Breast epithelium (tissue), 4 donors: ENCODE measurements at regions of chr12 and their contacts with region 1.

Region 1: DNA sequence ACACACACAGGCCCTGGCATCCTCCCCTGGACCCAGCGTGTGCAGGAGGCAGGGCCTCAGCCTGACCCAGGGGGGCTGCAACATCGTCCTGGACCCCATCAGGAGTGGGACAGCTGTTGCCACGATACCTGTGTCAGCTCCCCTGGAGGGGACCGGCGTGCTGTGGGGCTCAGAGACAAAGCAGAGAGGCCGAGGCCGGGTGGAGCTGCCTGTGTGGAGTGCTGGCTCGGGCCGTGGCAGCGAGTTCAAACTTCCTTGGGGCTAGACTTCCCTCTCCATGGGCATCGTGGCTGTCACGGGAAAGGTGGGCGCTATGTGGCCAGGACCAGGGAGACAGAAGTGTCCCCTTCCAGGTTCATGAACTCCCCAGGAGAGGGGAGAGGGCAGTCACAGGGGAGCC is 155.0 kb upstream of the SFSWAP start:
- DNase-seq: no peak
- H3K4me3 ChIP-seq: no peak overlapping the region
- H3K27ac ChIP-seq: no peak overlapping the region
- H3K4me1 ChIP-seq: no peaks in the 10 kb centered on the region
- H3K27me3 ChIP-seq: peaks cover 0 to 38% of the 10 kb centered on the region in 2 donors
- CTCF ChIP-seq: no peak
- POLR2A ChIP-seq: no peak

Region 2: GRCh38 chr12:131454418-131455217 is 101.2 kb before region 1 on chr12:
- intact Hi-C with region 1: no loop called
- DNase-seq: no peak
- H3K4me3 ChIP-seq: no peak overlapping the region
- H3K27ac ChIP-seq: no peak overlapping the region
- H3K4me1 ChIP-seq: no peaks in the 10 kb centered on the region
- H3K27me3 ChIP-seq: peaks cover 0 to 38% of the 10 kb centered on the region in 2 donors
- CTCF ChIP-seq: peak in 1 of 3 donors; percentile 32
- POLR2A ChIP-seq: no peak

Region 3: DNA sequence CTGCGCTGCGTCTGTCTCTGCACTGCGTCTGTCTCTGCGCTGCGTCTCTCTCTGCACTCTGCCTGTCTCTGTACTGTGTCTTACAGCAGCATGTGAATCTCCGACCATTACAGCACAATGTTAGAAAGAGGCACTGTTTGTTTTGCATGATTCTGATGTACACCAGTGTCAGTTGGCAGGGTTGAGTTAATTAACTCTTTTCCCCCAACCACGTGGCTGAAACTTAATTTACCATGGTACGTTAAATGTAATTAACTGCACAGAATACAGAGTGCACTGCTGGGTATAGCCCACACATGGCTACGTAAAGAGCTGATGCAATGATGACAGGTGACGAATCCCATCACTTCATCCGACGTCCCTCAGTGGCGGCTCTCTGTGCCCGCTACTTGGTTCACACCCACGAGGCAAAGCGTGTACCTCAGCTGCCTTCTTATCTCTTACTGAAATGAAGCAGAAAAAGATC is 27.4 kb after region 1 on chr12:
- intact Hi-C with region 1: loop called (anchors 1 kb)
- DNase-seq: no peak
- H3K4me3 ChIP-seq: no peak overlapping the region
- H3K27ac ChIP-seq: no peak overlapping the region
- H3K4me1 ChIP-seq: no peaks in the 10 kb centered on the region
- H3K27me3 ChIP-seq: peaks cover 0 to 22% of the 10 kb centered on the region in 2 donors
- CTCF ChIP-seq: no peak
- POLR2A ChIP-seq: no peak